ENCODE measurements at regions of chr1 and their contacts with region 1.

Region 1: DNA sequence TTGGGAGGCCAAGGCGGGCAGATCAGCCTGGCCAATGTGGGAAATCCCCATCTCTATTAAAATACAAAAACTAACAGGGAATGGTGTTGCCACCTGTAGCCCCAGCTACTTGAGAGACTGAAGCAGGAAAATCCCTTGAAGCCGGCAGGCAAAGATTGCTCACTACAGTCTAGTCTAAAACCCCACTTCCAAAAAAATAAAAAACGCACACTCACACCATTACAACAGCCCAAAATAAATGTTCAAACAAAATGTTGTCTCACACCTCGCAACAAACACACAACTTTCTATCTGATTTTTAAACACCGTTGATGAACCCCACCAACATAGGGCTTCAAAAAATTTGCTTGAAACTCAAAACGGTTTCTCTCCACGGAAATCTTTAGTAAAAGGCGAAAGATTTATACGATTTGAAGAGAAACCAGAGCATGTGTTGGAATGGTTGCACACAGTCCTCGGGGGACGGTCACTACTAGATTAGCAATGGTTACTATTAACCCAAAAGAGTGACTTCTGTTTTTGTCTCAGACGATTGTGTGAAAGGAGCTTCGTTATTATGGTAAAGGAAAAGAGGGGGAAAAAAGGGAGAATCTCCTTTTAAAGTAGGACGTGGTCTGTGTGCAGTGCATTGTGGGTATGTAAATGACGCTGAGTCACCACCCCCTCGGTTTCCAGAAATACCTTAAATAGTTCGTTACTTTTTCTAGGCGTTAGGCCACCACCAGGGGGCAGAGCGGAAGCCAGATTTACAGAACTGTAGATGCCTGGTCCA is at the start of gene RNU5D-1:
- DNase-seq: peak; percentile 95
- H3K4me3 Mint-ChIP-seq: peak within 1 kb of the TSS; percentile 62
- H3K27ac Mint-ChIP-seq: peak within 1 kb of the TSS; percentile 99
- H3K4me1 Mint-ChIP-seq: peaks cover 35% of the 10 kb centered on the region
- H3K27me3 Mint-ChIP-seq: peaks cover 4% of the 10 kb centered on the region
- total RNA-seq, gene RNU5D-1: not detected

Region 2: GRCh38 chr1:44405041-44405797 is 325.7 kb before region 1 on chr1 and contains the start of gene RNF220:
- CTCF ChIA-PET with region 1: no interaction called
- POLR2A ChIA-PET with region 1: no interaction called
- DNase-seq: peak; percentile 38
- H3K4me3 Mint-ChIP-seq: peak within 1 kb of the TSS; percentile 56
- H3K27ac Mint-ChIP-seq: no peak within 1 kb of the TSS
- H3K4me1 Mint-ChIP-seq: peaks cover 33% of the 10 kb centered on the region
- H3K27me3 Mint-ChIP-seq: peaks cover 64% of the 10 kb centered on the region
- total RNA-seq, gene RNF220: 69.0 to 70.7 TPM

Region 3: GRCh38 chr1:44696789-44697345 is 34.1 kb before region 1 on chr1:
- CTCF ChIA-PET with region 1: interaction called, 4 read pairs
- POLR2A ChIA-PET with region 1: interaction called, 14 read pairs
- DNase-seq: peak; percentile 58
- H3K4me3 Mint-ChIP-seq: no peak overlapping the region
- H3K27ac Mint-ChIP-seq: peak overlapping the region; percentile 83
- H3K4me1 Mint-ChIP-seq: peaks cover 21% of the 10 kb centered on the region
- H3K27me3 Mint-ChIP-seq: no peaks in the 10 kb centered on the region

Region 4: DNA sequence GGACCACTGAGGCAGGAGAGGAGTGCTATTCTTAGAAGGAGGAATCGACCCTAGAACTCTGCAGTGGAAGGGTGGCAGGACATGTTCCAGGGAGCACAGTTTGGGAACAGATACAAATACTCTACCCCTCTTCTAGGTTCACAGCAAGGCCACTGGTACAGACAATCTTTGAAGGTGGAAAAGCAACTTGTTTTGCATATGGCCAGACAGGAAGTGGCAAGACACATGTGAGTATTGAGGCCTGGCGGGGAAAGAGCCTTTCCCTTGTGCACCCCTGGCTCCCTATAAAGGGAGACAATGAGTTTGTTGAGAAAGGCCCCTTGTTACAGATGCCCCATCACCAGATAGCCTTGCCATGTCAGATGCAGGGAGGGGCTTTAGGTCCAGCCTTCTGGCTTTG is 26.5 kb after region 1 on chr1:
- CTCF ChIA-PET with region 1: interaction called, 5 read pairs
- POLR2A ChIA-PET with region 1: interaction called, 27 read pairs
- DNase-seq: no peak
- H3K4me3 Mint-ChIP-seq: no peak overlapping the region
- H3K27ac Mint-ChIP-seq: peak overlapping the region; percentile 31
- H3K4me1 Mint-ChIP-seq: peaks cover 8% of the 10 kb centered on the region
- H3K27me3 Mint-ChIP-seq: no peaks in the 10 kb centered on the region

Region 5: GRCh38 chr1:44792783-44793714 is 62.1 kb after region 1 on chr1:
- CTCF ChIA-PET with region 1: interaction called, 12 read pairs
- POLR2A ChIA-PET with region 1: interaction called, 454 read pairs
- DNase-seq: no peak
- H3K4me3 Mint-ChIP-seq: no peak overlapping the region
- H3K27ac Mint-ChIP-seq: no peak overlapping the region
- H3K4me1 Mint-ChIP-seq: peaks cover 2% of the 10 kb centered on the region
- H3K27me3 Mint-ChIP-seq: no peaks in the 10 kb centered on the region

Region 6: DNA sequence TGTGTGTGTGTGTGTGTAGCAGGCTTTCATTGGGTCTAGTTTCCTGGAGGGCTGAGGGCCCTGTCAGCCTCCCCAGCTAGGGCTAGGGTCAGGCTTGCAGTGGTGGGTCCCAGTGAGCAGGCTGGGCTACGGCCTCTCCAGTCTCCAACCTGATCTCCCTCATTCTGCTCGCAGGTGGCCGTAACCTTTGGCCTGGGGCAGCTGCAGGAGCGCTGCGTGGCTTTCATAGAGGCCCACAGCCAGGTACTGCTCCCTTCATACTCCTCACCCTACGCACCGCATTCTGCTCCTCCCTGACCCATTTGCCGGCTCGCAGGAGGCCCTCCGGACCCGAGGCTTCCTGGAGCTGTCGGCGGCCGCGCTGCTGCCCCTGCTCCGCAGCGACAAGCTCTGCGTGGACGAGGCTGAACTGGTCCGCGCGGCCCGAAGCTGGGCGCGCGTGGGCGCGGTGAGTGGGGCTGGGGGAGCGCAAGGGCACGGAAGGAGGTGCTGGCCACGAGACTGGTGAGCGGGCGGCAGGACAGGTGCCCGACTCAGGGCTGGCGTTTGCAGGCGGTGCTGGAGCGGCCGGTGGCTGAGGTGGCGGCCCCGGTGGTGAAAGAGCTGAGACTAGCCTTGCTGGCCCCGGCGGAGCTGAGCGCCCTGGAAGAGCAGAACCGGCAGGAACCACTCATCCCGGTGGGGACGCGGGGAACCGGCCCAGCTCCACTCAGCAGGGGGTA is 82.1 kb after region 1 on chr1:
- CTCF ChIA-PET with region 1: interaction called, 16 read pairs
- POLR2A ChIA-PET with region 1: interaction called, 229 read pairs
- DNase-seq: no peak
- H3K4me3 Mint-ChIP-seq: peak overlapping the region; percentile 83
- H3K27ac Mint-ChIP-seq: peak overlapping the region; percentile 98
- H3K4me1 Mint-ChIP-seq: peaks cover 70% of the 10 kb centered on the region
- H3K27me3 Mint-ChIP-seq: no peaks in the 10 kb centered on the region

Region 7: GRCh38 chr1:44894591-44894990 is 163.7 kb after region 1 on chr1:
- CTCF ChIA-PET with region 1: no interaction called
- POLR2A ChIA-PET with region 1: no interaction called
- DNase-seq: no peak
- H3K4me3 Mint-ChIP-seq: no peak overlapping the region
- H3K27ac Mint-ChIP-seq: no peak overlapping the region
- H3K4me1 Mint-ChIP-seq: peaks cover 5% of the 10 kb centered on the region
- H3K27me3 Mint-ChIP-seq: no peaks in the 10 kb centered on the region

Region 8: GRCh38 chr1:45011837-45012638 is 281.1 kb after region 1 on chr1 and contains the start of gene UROD:
- CTCF ChIA-PET with region 1: interaction called, 22 read pairs
- POLR2A ChIA-PET with region 1: interaction called, 43 read pairs
- DNase-seq: peak; percentile 94
- H3K4me3 Mint-ChIP-seq: peak within 1 kb of the TSS; percentile 81
- H3K27ac Mint-ChIP-seq: peak within 1 kb of the TSS; percentile 85
- H3K4me1 Mint-ChIP-seq: peaks cover 47% of the 10 kb centered on the region
- H3K27me3 Mint-ChIP-seq: no peaks in the 10 kb centered on the region
- total RNA-seq, gene UROD: 67.1 to 74.9 TPM

Region 9: DNA sequence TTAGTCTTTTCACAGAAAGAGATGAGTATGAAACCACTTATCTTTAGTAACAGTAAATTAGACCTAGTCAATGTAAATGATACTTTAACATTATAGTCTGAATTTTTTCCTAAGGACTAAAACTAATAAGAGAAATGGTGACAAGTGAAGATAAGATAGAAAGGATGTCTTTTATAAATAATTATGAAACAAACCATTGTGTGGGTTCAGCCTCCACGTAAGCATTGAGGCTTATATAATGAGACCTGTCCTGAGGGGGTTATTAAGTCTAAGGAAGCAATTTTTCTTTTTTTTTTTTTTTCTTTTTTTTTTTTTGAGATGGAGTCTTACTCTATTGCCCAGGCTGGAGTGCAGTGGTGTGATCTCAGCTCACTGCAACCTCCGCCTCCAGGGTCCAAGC is 336.9 kb after region 1 on chr1:
- CTCF ChIA-PET with region 1: no interaction called
- POLR2A ChIA-PET with region 1: no interaction called
- DNase-seq: no peak
- H3K4me3 Mint-ChIP-seq: no peak overlapping the region
- H3K27ac Mint-ChIP-seq: no peak overlapping the region
- H3K4me1 Mint-ChIP-seq: no peaks in the 10 kb centered on the region
- H3K27me3 Mint-ChIP-seq: peaks cover 3% of the 10 kb centered on the region

Region 10: GRCh38 chr1:45583264-45583665 is 852.3 kb after region 1 on chr1:
- CTCF ChIA-PET with region 1: no interaction called
- POLR2A ChIA-PET with region 1: interaction called, 17 read pairs
- DNase-seq: peak; percentile 96
- H3K4me3 Mint-ChIP-seq: peak overlapping the region; percentile 88
- H3K27ac Mint-ChIP-seq: peak overlapping the region; percentile 98
- H3K4me1 Mint-ChIP-seq: peaks cover 29% of the 10 kb centered on the region
- H3K27me3 Mint-ChIP-seq: no peaks in the 10 kb centered on the region